ENCODE measurements at regions of chr14 and their contacts with region 1.

Region 1: DNA sequence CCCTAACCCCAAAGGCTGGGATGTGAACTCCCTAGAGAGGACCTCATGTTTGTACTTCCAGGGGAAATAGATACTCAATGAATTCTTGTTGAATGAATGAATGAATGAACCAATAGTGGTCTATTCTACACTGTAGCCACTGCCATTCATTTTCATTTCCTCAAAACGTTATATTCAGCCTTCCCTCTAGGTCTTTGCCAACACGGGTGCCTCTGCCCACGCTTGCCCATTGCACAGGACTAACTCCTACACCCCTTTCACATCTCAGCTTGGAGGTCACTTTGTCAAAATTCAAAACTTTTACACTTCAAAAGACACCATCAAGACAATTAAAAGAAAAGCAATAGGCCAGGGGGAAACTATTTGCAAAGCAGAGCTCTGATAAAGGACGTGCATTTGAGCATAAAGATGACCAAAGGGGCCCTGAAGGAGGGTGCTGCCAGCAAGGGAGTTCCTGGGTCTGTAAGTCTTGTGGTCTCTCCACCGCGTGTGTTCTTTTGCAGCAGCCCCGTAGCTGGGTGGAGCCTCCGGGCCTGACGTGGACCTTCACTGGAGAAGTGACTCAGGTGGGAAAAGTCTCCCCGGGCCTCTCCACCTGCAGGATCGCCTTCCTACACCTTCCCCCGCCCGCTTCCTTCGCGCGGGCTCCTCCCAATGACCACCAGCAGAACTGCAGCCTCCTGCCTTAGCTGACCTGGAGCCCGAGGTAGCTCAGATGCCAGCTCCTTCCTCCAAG is 31.5 kb downstream of the TMEM63C start:
- DNase-seq: no peak
- ATAC-seq: peak; percentile 97
- H3K4me3 ChIP-seq: no peak overlapping the region
- H3K27ac ChIP-seq: no peak overlapping the region
- H3K4me1 ChIP-seq: no peaks in the 10 kb centered on the region
- H3K27me3 ChIP-seq: 0 out of 4 replicates have a peak, but pooled peaks cover 0 to 4% of the 10 kb centered on the region in 2 experiments
- CTCF ChIP-seq: peak; percentile 70 to 89 (median 83)
- EP300 ChIP-seq: no peak
- POLR2A ChIP-seq: no peak
- RAD21 ChIP-seq: peak; percentile 66

Region 2: DNA sequence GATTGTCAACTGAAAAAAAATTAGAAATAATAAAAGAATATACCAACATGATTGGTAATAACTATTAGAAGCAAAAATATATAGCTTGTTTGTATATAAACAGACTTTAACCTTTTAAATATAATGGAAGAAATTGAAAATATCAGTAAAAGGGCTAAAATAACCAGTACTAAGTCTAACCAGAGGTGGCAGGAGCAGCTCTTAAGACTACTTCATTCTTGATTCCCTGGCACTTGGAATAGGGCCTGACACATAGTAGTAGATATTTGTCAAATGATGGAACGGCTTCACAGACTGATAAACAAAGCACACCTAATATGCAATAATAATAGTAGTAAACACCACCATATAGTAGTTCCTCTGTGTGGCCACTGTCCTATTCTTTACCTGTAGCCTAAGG is 22.1 kb before region 1 on chr14:
- CTCF ChIA-PET with region 1: interaction called, 13 read pairs
- POLR2A ChIA-PET with region 1: no interaction called
- RAD21 ChIA-PET with region 1: interaction called, 3 read pairs
- SMC1A ChIA-PET with region 1: interaction called, 4 read pairs
- in situ Hi-C with region 1: no loop called
- intact Hi-C with region 1: no loop called
- DNase-seq: no peak
- ATAC-seq: no peak
- H3K4me3 ChIP-seq: no peak overlapping the region
- H3K27ac ChIP-seq: no peak overlapping the region
- H3K4me1 ChIP-seq: no peaks in the 10 kb centered on the region
- H3K27me3 ChIP-seq: peaks cover 0 to 1% of the 10 kb centered on the region in 2 experiments; a peak in 2 of 4 replicates
- CTCF ChIP-seq: no peak
- EP300 ChIP-seq: no peak
- POLR2A ChIP-seq: no peak
- RAD21 ChIP-seq: no peak

Region 3: DNA sequence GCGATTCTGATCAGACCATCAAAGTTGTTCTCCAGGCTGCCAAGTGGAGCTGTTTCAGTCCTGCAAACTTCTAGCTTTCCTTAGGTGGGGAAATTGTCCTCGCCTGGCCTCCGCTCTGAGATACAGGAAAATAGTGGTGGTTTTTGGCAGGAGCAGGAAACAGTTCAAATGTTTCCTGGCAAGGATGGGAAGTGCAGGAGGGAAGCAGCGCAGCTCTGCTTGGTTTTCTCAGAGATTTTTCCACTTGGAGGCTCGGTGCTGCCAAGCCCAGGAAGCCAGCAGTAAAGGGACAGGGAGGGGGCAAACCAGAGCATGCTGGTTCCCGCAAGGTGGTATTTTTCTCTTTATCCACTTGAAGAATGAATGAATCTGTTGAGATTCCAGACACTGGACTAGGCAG is 14.6 kb before region 1 on chr14:
- CTCF ChIA-PET with region 1: interaction called, 7 read pairs
- POLR2A ChIA-PET with region 1: no interaction called
- RAD21 ChIA-PET with region 1: interaction called, 3 read pairs
- SMC1A ChIA-PET with region 1: interaction called, 3 read pairs
- in situ Hi-C with region 1: no loop called
- intact Hi-C with region 1: loop called (anchors 1 kb)
- DNase-seq: no peak
- ATAC-seq: no peak
- H3K4me3 ChIP-seq: no peak overlapping the region
- H3K27ac ChIP-seq: no peak overlapping the region
- H3K4me1 ChIP-seq: no peaks in the 10 kb centered on the region
- H3K27me3 ChIP-seq: peaks cover 0 to 9% of the 10 kb centered on the region in 2 experiments; a peak in 2 of 4 replicates
- CTCF ChIP-seq: no peak
- EP300 ChIP-seq: no peak
- POLR2A ChIP-seq: no peak
- RAD21 ChIP-seq: no peak

Measured in GM12878 (cell line).